ENCODE measurements at regions of chr6 and their contacts with region 1.

Region 1: GRCh38 chr6:116010790-116011401 is 49.8 kb downstream of the FRK start:
- DNase-seq: peak; percentile 69
- ATAC-seq: peak; percentile 57
- H3K4me3 ChIP-seq: no peak overlapping the region
- H3K4me3 Mint-ChIP-seq: no peak overlapping the region
- H3K27ac ChIP-seq: no peak overlapping the region
- H3K27ac Mint-ChIP-seq: no peak overlapping the region
- H3K4me1 ChIP-seq: peaks cover 3 to 10% of the 10 kb centered on the region in 2 donors
- H3K4me1 Mint-ChIP-seq: peaks cover 21% of the 10 kb centered on the region
- H3K27me3 ChIP-seq: no peaks in the 10 kb centered on the region
- H3K27me3 Mint-ChIP-seq: peaks cover 3% of the 10 kb centered on the region
- CTCF ChIP-seq: peak; percentile 88

Region 2: GRCh38 chr6:116078522-116078921 is 67.6 kb after region 1 on chr6:
- CTCF ChIA-PET with region 1: interaction called, 10 read pairs
- POLR2A ChIA-PET with region 1: no interaction called
- intact Hi-C with region 1: no loop called
- DNase-seq: no peak
- ATAC-seq: no peak
- H3K4me3 ChIP-seq: no peak overlapping the region
- H3K4me3 Mint-ChIP-seq: no peak overlapping the region
- H3K27ac ChIP-seq: no peak overlapping the region
- H3K27ac Mint-ChIP-seq: no peak overlapping the region
- H3K4me1 ChIP-seq: no peaks in the 10 kb centered on the region
- H3K4me1 Mint-ChIP-seq: no peaks in the 10 kb centered on the region
- H3K27me3 ChIP-seq: peaks cover 0 to 6% (median 1%) of the 10 kb centered on the region in 4 experiments
- H3K27me3 Mint-ChIP-seq: peaks cover 19% of the 10 kb centered on the region
- CTCF ChIP-seq: no peak

Region 3: GRCh38 chr6:116087437-116088027 is 76.6 kb after region 1 on chr6:
- CTCF ChIA-PET with region 1: interaction called, 17 read pairs
- POLR2A ChIA-PET with region 1: no interaction called
- intact Hi-C with region 1: no loop called
- DNase-seq: peak; percentile 45
- ATAC-seq: peak; percentile 80
- H3K4me3 ChIP-seq: no peak overlapping the region
- H3K4me3 Mint-ChIP-seq: peak overlapping the region; percentile 12
- H3K27ac ChIP-seq: no peak overlapping the region
- H3K27ac Mint-ChIP-seq: peak overlapping the region; percentile 75
- H3K4me1 ChIP-seq: peaks cover 15 to 18% of the 10 kb centered on the region in 2 donors
- H3K4me1 Mint-ChIP-seq: peaks cover 28% of the 10 kb centered on the region
- H3K27me3 ChIP-seq: no peaks in the 10 kb centered on the region
- H3K27me3 Mint-ChIP-seq: peaks cover 3% of the 10 kb centered on the region
- CTCF ChIP-seq: no peak

Region 4: DNA sequence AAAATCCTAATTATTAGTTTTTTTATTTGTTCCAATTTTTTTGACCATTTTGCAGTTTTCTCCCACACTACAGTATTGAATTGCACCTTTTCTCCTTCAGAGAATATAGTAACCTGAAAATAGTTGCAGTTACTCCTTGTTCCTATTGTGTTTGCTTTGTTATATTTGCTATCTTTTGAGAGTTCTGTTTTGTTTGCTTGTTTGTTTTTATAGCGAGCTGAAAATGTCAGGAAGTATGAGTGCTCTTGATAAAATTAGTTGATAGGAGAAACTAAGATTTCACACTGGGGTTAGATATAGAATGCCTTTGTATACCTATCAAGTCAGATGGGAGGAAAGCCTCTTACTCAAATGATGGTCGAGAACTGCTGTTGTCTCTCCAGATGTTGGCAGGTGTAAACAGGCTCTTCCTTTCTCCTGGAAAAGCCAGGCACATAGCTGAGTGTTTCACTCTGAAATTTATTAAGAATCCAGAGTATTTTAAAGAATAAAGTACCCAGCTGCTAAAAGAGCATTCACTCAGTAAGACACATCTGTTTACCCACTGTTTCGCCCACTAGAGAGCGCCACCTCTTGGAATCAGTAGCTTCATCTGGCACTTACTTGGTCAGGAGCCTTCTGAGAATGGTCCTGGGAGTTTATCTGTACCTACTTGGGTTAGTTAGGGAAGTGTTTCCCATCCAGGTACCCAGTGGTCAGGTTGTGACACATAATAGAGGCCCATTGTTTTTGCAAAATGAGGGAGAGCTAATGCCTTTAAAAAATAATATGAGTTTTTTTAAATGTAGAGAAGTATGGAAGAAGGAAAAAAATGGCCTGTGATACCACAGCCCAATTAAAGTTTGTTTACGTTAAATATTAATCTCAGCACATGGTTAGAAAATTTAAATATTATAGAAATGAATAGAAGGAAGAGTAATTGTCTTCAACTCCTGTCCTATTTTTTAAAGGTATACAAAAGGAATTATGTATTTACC is 100.9 kb after region 1 on chr6:
- CTCF ChIA-PET with region 1: interaction called, 29 read pairs
- POLR2A ChIA-PET with region 1: no interaction called
- intact Hi-C with region 1: no loop called
- DNase-seq: peak; percentile 24
- ATAC-seq: no peak
- H3K4me3 ChIP-seq: no peak overlapping the region
- H3K4me3 Mint-ChIP-seq: no peak overlapping the region
- H3K27ac ChIP-seq: no peak overlapping the region
- H3K27ac Mint-ChIP-seq: no peak overlapping the region
- H3K4me1 ChIP-seq: no peaks in the 10 kb centered on the region
- H3K4me1 Mint-ChIP-seq: no peaks in the 10 kb centered on the region
- H3K27me3 ChIP-seq: no peaks in the 10 kb centered on the region
- H3K27me3 Mint-ChIP-seq: no peaks in the 10 kb centered on the region
- CTCF ChIP-seq: peak; percentile 39

Region 5: DNA sequence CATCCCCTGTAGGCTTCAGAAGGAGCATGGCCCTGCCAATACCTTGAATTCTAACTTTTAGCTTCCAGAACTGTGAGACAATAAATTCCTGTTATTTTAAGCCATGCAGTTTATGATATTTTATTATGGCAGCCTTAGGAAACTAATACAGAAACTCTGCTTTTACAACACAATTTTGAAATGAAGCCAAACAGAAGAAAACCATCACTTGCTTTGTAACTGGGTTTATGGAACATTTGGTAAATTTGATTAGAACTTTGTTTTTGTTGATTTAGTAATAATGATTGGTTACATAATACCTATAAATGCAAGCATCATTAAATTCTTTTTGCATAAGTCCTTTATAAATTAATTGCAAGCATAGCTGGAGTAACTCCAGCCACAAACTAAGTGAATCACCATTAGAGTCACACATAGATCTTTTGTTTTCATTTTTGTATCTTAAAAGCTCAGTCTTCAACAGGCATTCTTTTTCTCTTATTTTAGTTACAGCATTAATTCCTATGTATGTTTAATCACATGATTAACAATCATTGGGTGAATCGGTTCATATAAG is 302.4 kb after region 1 on chr6:
- CTCF ChIA-PET with region 1: no interaction called
- POLR2A ChIA-PET with region 1: no interaction called
- intact Hi-C with region 1: no loop called
- DNase-seq: no peak
- ATAC-seq: no peak
- H3K4me3 ChIP-seq: no peak overlapping the region
- H3K4me3 Mint-ChIP-seq: no peak overlapping the region
- H3K27ac ChIP-seq: no peak overlapping the region
- H3K27ac Mint-ChIP-seq: no peak overlapping the region
- H3K4me1 ChIP-seq: peaks cover 9% of the 10 kb centered on the region in 2 donors
- H3K4me1 Mint-ChIP-seq: peaks cover 7% of the 10 kb centered on the region
- H3K27me3 ChIP-seq: no peaks in the 10 kb centered on the region
- H3K27me3 Mint-ChIP-seq: no peaks in the 10 kb centered on the region
- CTCF ChIP-seq: no peak

Region 6: DNA sequence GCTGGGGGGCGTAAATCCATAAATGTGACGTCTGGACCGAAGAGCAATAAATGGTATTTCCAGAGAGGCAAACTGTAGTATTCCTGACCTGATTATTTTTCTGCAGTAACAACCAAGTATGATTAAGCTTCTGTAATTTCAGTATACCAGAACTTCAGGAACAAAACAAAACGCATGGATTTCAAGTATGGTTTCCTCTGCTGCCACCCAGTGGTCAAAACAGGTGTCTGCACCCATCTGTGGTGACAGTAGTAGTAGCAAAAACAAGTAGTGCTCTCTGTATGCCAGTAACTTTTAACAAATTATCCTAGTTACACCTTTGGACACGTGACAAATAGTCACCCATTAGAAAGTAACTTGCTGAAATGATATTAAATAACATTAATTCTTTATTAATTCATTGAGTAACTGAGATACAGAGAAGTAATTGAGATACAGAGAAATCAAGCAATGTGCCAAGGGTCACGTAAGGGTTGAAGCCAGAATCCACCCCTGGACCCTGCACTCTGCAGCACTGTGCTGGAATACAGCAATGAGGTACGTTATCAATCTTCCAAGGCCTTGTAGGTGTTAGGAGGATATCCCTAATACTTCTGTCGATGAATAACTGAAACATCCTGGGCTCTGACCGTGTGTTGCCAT is 550.6 kb after region 1 on chr6:
- CTCF ChIA-PET with region 1: no interaction called
- POLR2A ChIA-PET with region 1: no interaction called
- intact Hi-C with region 1: loop called (anchors 10 kb)
- DNase-seq: peak; percentile 78
- ATAC-seq: peak; percentile 82
- H3K4me3 ChIP-seq: no peak overlapping the region
- H3K4me3 Mint-ChIP-seq: no peak overlapping the region
- H3K27ac ChIP-seq: no peak overlapping the region
- H3K27ac Mint-ChIP-seq: no peak overlapping the region
- H3K4me1 ChIP-seq: peaks cover 5 to 7% of the 10 kb centered on the region in 2 donors
- H3K4me1 Mint-ChIP-seq: peaks cover 4% of the 10 kb centered on the region
- H3K27me3 ChIP-seq: peaks cover 0 to 14% (median 9%) of the 10 kb centered on the region in 4 experiments
- H3K27me3 Mint-ChIP-seq: peaks cover 31% of the 10 kb centered on the region
- CTCF ChIP-seq: peak; percentile 98

Region 7: GRCh38 chr6:116667623-116668022 is 656.7 kb after region 1 on chr6:
- CTCF ChIA-PET with region 1: no interaction called
- POLR2A ChIA-PET with region 1: no interaction called
- intact Hi-C with region 1: loop called (anchors 10 kb)
- DNase-seq: peak; percentile 76
- ATAC-seq: peak; percentile 52
- H3K4me3 ChIP-seq: peak overlapping the region; percentile 73 to 96 (median 91)
- H3K4me3 Mint-ChIP-seq: peak overlapping the region; percentile 100
- H3K27ac ChIP-seq: peak overlapping the region; percentile 88 to 92
- H3K27ac Mint-ChIP-seq: peak overlapping the region; percentile 61
- H3K4me1 ChIP-seq: peaks cover 15 to 26% of the 10 kb centered on the region in 2 donors
- H3K4me1 Mint-ChIP-seq: peaks cover 36% of the 10 kb centered on the region
- H3K27me3 ChIP-seq: no peaks in the 10 kb centered on the region
- H3K27me3 Mint-ChIP-seq: peaks cover 11% of the 10 kb centered on the region
- CTCF ChIP-seq: no peak

Measured in B cell (primary cell).